Activated CD4-positive, alpha-beta T cell treated with anti-CD3 and anti-CD28 coated beads for 36 hours (primary cell): ENCODE measurements at regions of chr10 and their contacts with region 1.

Region 1: DNA sequence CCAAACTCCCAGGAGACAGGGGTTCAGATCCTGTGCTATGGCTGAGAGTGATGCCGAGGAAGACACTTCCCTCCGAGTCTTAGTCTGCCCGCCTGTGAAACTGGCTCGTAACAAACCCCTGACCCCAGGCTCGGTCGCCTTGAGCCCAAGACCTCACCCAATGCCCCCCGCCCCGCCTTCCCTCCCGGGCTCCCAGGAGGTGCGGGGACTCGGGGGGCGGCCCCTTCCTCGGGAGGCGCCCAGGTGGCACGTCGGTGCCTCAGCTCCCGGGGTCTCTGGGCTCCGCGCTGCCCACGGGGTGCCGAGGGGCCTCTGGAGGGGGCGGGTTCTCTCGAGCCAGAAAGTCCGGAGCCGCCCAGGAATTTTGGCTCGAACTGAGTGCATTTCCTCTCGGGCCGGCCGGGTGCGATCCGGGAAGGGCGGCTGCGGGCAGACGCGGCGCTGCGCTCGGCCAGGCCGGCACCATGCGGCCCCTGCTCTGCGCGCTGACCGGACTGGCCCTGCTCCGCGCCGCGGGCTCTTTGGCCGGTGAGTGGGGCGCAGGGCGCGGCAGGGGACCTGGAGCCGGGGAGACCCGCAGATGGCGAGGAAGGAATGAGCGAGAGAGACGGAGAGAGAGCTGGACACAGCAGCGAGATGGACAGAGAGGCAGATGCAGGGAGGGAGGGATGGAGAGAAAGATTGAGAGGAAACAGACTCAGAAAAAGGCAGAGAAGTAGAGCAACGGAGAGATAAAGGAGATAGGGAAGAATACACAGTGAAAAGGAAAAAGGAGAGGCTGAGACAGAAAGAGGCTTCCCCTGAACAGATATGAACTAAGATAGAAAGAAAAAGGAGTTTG is at the start of gene PLAC9:
- DNase-seq: no peak
- ATAC-seq: no peak
- H3K4me3 Mint-ChIP-seq: no peak within 1 kb of the TSS
- H3K27ac Mint-ChIP-seq: no peak within 1 kb of the TSS
- H3K4me1 Mint-ChIP-seq: peaks cover 4% of the 10 kb centered on the region
- H3K27me3 Mint-ChIP-seq: peaks cover 24% of the 10 kb centered on the region
- total RNA-seq, gene PLAC9: not detected

Region 2: GRCh38 chr10:80055760-80056159 is 76.8 kb before region 1 on chr10:
- CTCF ChIA-PET with region 1: interaction called, 18 read pairs
- POLR2A ChIA-PET with region 1: no interaction called
- intact Hi-C with region 1: loop called (anchors 1 to 5 kb)
- DNase-seq: no peak
- ATAC-seq: no peak
- H3K4me3 Mint-ChIP-seq: no peak overlapping the region
- H3K27ac Mint-ChIP-seq: no peak overlapping the region
- H3K4me1 Mint-ChIP-seq: no peaks in the 10 kb centered on the region
- H3K27me3 Mint-ChIP-seq: no peaks in the 10 kb centered on the region

Region 3: DNA sequence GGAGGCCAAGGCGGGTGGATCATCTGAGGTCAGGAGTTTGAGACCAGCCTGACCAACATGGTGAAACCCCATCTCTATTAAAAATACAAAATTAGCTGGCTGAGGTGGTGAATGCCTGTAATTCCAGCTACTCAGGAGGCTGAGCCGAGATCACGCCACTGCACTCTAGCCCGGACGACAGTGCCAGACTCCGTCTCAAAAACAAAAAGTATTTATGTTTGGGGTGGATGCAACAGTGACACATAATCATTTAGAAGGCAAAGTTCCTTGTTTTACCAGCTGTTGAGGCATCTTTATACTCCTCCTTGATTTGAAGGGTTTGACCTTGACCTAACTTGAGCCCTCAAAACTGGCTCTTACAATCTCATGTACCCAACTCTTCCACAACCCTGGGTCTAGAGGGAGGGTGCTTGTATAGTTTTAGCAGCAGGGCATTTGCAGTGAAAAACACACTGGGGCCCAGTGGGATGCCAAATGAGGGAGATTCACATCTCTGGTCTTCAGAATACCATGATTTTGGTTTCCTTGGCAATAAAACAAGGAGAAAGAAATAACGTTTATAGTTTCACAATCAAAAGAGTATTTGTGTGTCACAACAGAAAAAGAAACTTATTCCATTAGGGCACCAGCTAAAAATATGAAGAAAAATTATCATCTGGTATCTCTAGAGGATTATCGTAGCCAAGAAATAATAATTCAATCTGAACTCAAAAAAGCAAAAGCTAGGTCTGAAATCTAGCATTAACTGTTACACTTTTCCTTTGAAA is 68.2 kb before region 1 on chr10:
- CTCF ChIA-PET with region 1: interaction called, 18 read pairs
- POLR2A ChIA-PET with region 1: no interaction called
- intact Hi-C with region 1: loop called in 1 of 2 experiments (anchors 5 kb)
- DNase-seq: no peak
- ATAC-seq: no peak
- H3K4me3 Mint-ChIP-seq: no peak overlapping the region
- H3K27ac Mint-ChIP-seq: no peak overlapping the region
- H3K4me1 Mint-ChIP-seq: no peaks in the 10 kb centered on the region
- H3K27me3 Mint-ChIP-seq: no peaks in the 10 kb centered on the region